Caco-2 (cell line): ENCODE measurements at regions of chr7 and their contacts with region 1.

Region 1: GRCh38 chr7:94683066-94683465 is 27.1 kb upstream of the SGCE start:
- DNase-seq: no peak
- H3K4me3 ChIP-seq: no peak overlapping the region
- H3K4me3 Mint-ChIP-seq: no peak overlapping the region
- H3K27ac Mint-ChIP-seq: no peak overlapping the region
- H3K4me1 ChIP-seq: peaks cover 16% of the 10 kb centered on the region
- H3K4me1 Mint-ChIP-seq: peaks cover 2% of the 10 kb centered on the region
- H3K27me3 ChIP-seq: no peaks in the 10 kb centered on the region
- H3K27me3 Mint-ChIP-seq: no peaks in the 10 kb centered on the region
- CTCF ChIP-seq: no peak

Region 2: GRCh38 chr7:93382362-93382761 is 1300.7 kb before region 1 on chr7:
- CTCF ChIA-PET with region 1: no interaction called
- POLR2A ChIA-PET with region 1: no interaction called
- intact Hi-C with region 1: loop called (anchors 5 kb)
- DNase-seq: no peak
- H3K4me3 ChIP-seq: no peak overlapping the region
- H3K4me3 Mint-ChIP-seq: no peak overlapping the region
- H3K27ac Mint-ChIP-seq: no peak overlapping the region
- H3K4me1 ChIP-seq: no peaks in the 10 kb centered on the region
- H3K4me1 Mint-ChIP-seq: no peaks in the 10 kb centered on the region
- H3K27me3 ChIP-seq: no peaks in the 10 kb centered on the region; the same call in 1 of the 2 replicates
- H3K27me3 Mint-ChIP-seq: peaks cover 20% of the 10 kb centered on the region
- CTCF ChIP-seq: no peak

Region 3: DNA sequence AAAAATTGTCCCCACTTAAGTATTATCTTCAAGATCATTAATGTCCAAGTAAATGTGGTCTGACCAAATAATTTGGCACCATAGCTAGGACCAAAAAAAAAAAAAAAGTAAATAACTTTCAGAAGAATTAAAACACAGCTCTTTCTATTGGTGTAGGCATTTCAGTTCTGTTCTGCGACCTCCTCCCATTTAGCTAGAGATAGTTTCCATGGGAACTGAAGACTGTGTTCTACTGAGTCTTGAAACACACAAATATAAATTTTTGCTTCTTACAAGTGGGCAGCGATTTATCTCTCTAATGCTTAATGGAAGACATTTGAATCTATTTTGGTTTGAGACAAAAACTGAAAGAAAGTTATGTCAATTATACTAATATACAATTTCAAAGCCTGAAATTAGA is 96.0 kb after region 1 on chr7:
- CTCF ChIA-PET with region 1: no interaction called
- POLR2A ChIA-PET with region 1: no interaction called
- intact Hi-C with region 1: no loop called
- DNase-seq: no peak
- H3K4me3 ChIP-seq: no peak overlapping the region
- H3K4me3 Mint-ChIP-seq: no peak overlapping the region
- H3K27ac Mint-ChIP-seq: no peak overlapping the region
- H3K4me1 ChIP-seq: no peaks in the 10 kb centered on the region
- H3K4me1 Mint-ChIP-seq: no peaks in the 10 kb centered on the region
- H3K27me3 ChIP-seq: no peaks in the 10 kb centered on the region
- H3K27me3 Mint-ChIP-seq: no peaks in the 10 kb centered on the region
- CTCF ChIP-seq: no peak